Psoas muscle (tissue), 8 donors: ENCODE measurements at regions of chrX and their contacts with region 1.

Region 1: GRCh38 chrX:103464774-103465117 is 54.5 kb downstream of the RAB40A start:
- DNase-seq: peak; percentile 47 to 60
- ATAC-seq: peak; percentile 42 to 72 (median 66)
- H3K4me3 ChIP-seq: peak overlapping the region; percentile 42
- H3K27ac ChIP-seq: no peak overlapping the region
- H3K4me1 ChIP-seq: no peaks in the 10 kb centered on the region
- H3K27me3 ChIP-seq: peaks cover 0 to 31% (median 0%) of the 10 kb centered on the region in 3 donors
- CTCF ChIP-seq: peak; percentile 55

Region 2: GRCh38 chrX:103214870-103215424 is 249.8 kb before region 1 on chrX and contains the start of gene BEX4:
- intact Hi-C with region 1: loop called in 1 of 2 experiments (anchors 10 kb)
- DNase-seq: peak; percentile 79 to 85
- ATAC-seq: peak; percentile 69 to 88 (median 78)
- H3K4me3 ChIP-seq: peak within 1 kb of the TSS; percentile 68
- H3K27ac ChIP-seq: peak within 1 kb of the TSS; percentile 61
- H3K4me1 ChIP-seq: no peaks in the 10 kb centered on the region
- H3K27me3 ChIP-seq: peaks cover 0 to 43% (median 0%) of the 10 kb centered on the region in 3 donors
- CTCF ChIP-seq: no peak
- total RNA-seq, gene BEX4: 1.9 to 4.6 (median 2.8) TPM

Region 3: DNA sequence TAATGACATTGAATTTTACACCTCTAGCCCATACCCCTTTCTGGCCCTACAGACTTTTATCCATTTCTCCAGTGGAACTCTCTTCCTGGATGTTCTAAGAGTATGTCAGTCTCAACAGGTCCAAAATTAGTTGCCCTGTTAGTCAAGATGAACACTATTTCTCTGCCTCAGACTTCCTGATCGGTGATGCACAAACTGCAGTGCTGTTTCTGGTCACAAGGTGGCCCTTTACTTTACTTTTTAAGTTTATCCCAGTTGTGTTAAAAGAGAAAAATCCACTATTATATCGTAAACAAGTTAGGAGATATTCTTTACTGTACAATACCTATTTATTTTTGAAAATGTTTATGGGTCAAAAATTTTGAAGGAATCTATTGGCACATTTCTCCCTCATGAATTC is 121.6 kb before region 1 on chrX:
- intact Hi-C with region 1: loop called in 1 of 2 experiments (anchors 5 kb)
- DNase-seq: no peak
- ATAC-seq: no peak
- H3K4me3 ChIP-seq: no peak overlapping the region
- H3K27ac ChIP-seq: no peak overlapping the region
- H3K4me1 ChIP-seq: no peaks in the 10 kb centered on the region
- H3K27me3 ChIP-seq: peaks cover 0 to 21% (median 0%) of the 10 kb centered on the region in 3 donors
- CTCF ChIP-seq: peak; percentile 59